ENCODE measurements at regions of chr7 and their contacts with region 1.

Region 1: GRCh38 chr7:43590862-43591550 is 8.1 kb downstream of the STK17A start:
- DNase-seq: peak; percentile 33
- H3K4me3 Mint-ChIP-seq: peak overlapping the region; percentile 46
- H3K27ac Mint-ChIP-seq: peak overlapping the region; percentile 70
- H3K4me1 Mint-ChIP-seq: peaks cover 85% of the 10 kb centered on the region
- H3K27me3 Mint-ChIP-seq: no peaks in the 10 kb centered on the region

Region 2: DNA sequence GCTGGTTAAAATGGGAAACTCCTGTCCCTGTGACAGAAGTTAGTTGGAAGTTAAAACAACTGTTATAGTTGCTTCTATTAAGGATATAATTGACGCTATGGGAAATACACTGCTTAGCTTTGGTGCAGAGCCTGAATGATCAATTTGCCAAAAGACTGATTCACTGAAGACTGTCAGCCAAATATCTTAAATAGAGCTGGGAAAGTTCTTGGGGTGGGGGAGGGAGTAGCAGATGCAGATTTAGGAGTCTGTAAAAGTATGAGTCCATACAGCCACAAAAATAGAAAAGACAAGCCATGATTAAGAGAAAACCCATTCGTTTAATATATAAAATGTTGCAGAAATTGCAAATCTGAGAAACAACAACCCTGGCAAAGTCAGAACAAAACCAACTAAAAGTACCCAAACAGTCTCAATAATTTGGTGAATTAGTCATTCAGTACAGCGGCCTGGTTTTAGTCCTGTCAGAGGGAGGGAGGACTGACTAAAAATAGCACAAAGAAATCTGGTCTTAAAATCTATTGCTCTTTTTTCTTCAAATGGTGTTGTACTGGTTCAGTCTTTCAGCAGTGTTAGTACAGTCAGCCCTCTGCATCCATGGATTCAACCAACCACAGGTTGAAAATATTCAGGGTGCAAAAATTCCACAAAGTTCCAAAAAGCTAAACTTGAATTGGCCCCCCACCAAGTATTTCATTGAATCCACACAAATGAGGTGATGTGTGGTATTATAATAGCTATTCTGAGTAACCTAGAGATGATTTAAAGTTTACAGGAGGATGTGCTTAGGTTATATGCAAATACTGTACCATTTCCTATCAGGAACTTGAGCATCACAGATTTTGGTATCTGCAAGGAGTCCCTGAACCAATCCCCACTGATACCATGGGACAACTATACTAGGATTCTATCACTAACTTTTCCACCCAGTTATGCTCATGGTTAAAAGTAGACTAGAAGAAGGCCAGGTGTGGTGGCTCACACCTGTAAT is 21.9 kb after region 1 on chr7:
- intact Hi-C with region 1: loop called (anchors 1 kb)
- DNase-seq: no peak
- H3K4me3 Mint-ChIP-seq: peak overlapping the region; percentile 8
- H3K27ac Mint-ChIP-seq: peak overlapping the region; percentile 77
- H3K4me1 Mint-ChIP-seq: peaks cover 58% of the 10 kb centered on the region
- H3K27me3 Mint-ChIP-seq: no peaks in the 10 kb centered on the region

Region 3: GRCh38 chr7:43621729-43622448 is 30.9 kb after region 1 on chr7:
- intact Hi-C with region 1: loop called (anchors 1 kb)
- DNase-seq: no peak
- H3K4me3 Mint-ChIP-seq: peak overlapping the region; percentile 6
- H3K27ac Mint-ChIP-seq: peak overlapping the region; percentile 69
- H3K4me1 Mint-ChIP-seq: peaks cover 55% of the 10 kb centered on the region
- H3K27me3 Mint-ChIP-seq: no peaks in the 10 kb centered on the region

Region 4: DNA sequence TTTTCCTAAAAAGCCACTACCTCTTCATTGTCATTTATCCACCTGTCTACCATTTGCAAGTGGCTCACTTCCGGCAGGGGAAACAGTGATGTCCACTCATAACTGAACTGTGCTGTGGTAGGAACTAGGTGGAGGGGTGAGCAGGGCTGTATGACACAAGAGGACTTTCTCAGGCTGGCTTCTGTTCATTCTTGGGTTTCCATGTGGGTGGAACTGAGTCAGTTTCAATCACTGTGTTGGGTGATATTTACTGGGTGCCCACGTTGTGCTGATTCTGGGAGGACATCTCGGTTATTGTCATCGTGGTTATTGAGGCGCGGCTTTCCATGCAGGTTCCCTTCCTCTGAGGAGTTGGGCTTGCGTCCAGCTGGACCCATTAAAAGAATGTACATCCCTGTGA is 1605.4 kb after region 1 on chr7:
- intact Hi-C with region 1: loop called (anchors 5 kb)
- DNase-seq: peak; percentile 14
- H3K4me3 Mint-ChIP-seq: no peak overlapping the region
- H3K27ac Mint-ChIP-seq: peak overlapping the region; percentile 83
- H3K4me1 Mint-ChIP-seq: peaks cover 67% of the 10 kb centered on the region
- H3K27me3 Mint-ChIP-seq: peaks cover 4% of the 10 kb centered on the region